Activated CD4-positive, alpha-beta T cell treated with anti-CD3 and anti-CD28 coated beads for 36 hours (primary cell): ENCODE measurements at regions of chr17 and their contacts with region 1.

Region 1: DNA sequence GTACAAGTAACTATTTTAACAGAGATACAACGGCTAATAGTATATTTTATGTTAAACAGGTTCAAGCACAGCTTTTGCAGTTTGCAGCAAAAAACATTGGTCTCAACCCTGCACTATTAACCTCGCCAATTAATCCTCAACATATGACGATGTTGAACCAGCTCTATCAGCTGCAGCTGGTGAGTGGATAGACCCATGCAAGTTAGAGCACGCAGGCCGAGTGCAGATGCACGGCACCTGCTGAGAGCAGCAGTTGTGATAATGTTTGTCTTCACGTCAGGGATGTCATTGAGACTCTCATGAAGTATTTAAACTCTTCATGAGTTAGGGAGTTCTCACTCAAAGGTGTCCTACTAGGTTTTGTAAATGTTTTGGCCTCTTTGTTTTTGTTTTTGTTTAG is 45.6 kb downstream of the TMC6 start:
- DNase-seq: no peak
- ATAC-seq: no peak
- H3K4me3 Mint-ChIP-seq: no peak overlapping the region
- H3K27ac Mint-ChIP-seq: no peak overlapping the region
- H3K4me1 Mint-ChIP-seq: no peaks in the 10 kb centered on the region
- H3K27me3 Mint-ChIP-seq: no peaks in the 10 kb centered on the region

Region 2: DNA sequence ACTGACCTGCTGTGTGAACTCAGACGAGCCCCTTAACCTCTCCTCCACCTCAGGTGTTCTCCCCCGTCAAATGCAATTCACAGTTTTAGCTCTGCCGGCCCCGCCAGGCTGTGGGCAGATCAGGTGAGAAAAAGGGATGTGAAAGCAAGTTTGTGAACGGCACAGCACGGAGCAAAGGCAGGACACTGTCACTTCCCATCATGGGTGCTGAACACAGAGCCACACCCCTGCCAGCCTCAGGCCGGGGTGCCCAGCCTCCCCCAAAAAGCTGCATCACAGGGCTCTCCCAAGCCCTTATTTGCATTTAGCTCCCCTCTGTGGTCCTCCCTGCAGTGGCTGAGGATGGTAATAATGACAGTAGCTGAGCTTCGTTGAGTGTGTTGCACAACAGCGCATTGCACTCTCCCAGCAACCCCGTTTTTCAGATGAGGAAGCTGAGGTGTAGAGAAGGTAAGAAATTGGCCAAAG is 213.3 kb before region 1 on chr17:
- CTCF ChIA-PET with region 1: no interaction called
- POLR2A ChIA-PET with region 1: no interaction called
- intact Hi-C with region 1: no loop called
- DNase-seq: peak; percentile 31
- ATAC-seq: peak; percentile 50
- H3K4me3 Mint-ChIP-seq: no peak overlapping the region
- H3K27ac Mint-ChIP-seq: no peak overlapping the region
- H3K4me1 Mint-ChIP-seq: peaks cover 43% of the 10 kb centered on the region
- H3K27me3 Mint-ChIP-seq: peaks cover 2% of the 10 kb centered on the region

Region 3: GRCh38 chr17:77968788-77969187 is 114.2 kb before region 1 on chr17:
- CTCF ChIA-PET with region 1: no interaction called
- POLR2A ChIA-PET with region 1: no interaction called
- intact Hi-C with region 1: no loop called
- DNase-seq: no peak
- ATAC-seq: no peak
- H3K4me3 Mint-ChIP-seq: no peak overlapping the region
- H3K27ac Mint-ChIP-seq: no peak overlapping the region
- H3K4me1 Mint-ChIP-seq: peaks cover 80% of the 10 kb centered on the region
- H3K27me3 Mint-ChIP-seq: no peaks in the 10 kb centered on the region

Region 4: GRCh38 chr17:78069695-78070094 is 13.3 kb before region 1 on chr17:
- CTCF ChIA-PET with region 1: interaction called, 13 read pairs
- POLR2A ChIA-PET with region 1: no interaction called
- intact Hi-C with region 1: no loop called
- DNase-seq: no peak
- ATAC-seq: no peak
- H3K4me3 Mint-ChIP-seq: no peak overlapping the region
- H3K27ac Mint-ChIP-seq: no peak overlapping the region
- H3K4me1 Mint-ChIP-seq: peaks cover 2% of the 10 kb centered on the region
- H3K27me3 Mint-ChIP-seq: no peaks in the 10 kb centered on the region

Region 5: GRCh38 chr17:78096093-78096492 is 13.1 kb after region 1 on chr17:
- CTCF ChIA-PET with region 1: interaction called, 12 read pairs
- POLR2A ChIA-PET with region 1: no interaction called
- intact Hi-C with region 1: no loop called
- DNase-seq: no peak
- ATAC-seq: no peak
- H3K4me3 Mint-ChIP-seq: no peak overlapping the region
- H3K27ac Mint-ChIP-seq: no peak overlapping the region
- H3K4me1 Mint-ChIP-seq: peaks cover 4% of the 10 kb centered on the region
- H3K27me3 Mint-ChIP-seq: no peaks in the 10 kb centered on the region

Region 6: DNA sequence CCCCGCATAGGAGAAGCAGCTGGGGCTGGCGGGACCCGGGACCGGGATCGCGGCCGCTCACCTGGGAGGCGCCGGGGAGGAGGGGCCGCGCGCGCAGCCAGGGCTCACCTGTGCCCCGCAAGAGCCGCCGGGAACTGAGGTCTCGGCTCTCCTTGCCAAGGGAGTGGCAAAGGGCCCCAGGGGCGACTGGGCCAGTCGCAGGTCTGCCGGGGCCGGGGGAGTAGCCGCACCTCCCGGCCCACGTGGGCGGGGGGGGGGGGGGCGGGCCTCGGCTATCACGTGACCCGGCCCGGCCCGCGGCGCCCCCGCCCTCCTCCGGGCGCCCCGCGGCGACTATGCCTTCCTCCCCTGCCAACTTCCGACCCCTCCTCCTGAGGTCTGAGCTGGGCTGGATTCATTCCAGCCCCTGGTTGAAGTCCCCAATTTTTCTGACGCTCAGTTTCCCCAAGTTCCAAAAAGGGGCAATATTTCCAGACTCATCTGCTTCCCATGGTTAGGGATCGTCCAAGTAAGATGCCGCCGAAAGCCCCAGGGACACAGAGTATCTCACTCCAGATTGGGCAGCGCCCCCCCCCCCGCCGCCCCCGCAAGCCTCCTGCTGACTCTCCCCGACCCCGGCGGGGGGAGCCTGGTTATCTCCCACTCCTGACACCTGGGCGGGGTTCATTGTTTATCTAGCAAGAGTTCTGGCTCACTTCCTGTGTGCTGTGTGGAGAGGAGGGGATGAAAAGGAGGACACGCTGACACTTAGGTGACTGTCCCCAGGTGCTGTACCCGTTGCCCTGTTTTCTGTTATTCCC is 45.8 kb after region 1 on chr17 and contains the start of gene TMC6:
- CTCF ChIA-PET with region 1: interaction called, 9 read pairs
- POLR2A ChIA-PET with region 1: no interaction called
- intact Hi-C with region 1: loop called in 1 of 2 experiments (anchors 2 kb)
- DNase-seq: peak; percentile 87
- ATAC-seq: peak; percentile 31
- H3K4me3 Mint-ChIP-seq: peak within 1 kb of the TSS; percentile 94
- H3K27ac Mint-ChIP-seq: peak within 1 kb of the TSS; percentile 96
- H3K4me1 Mint-ChIP-seq: peaks cover 52% of the 10 kb centered on the region
- H3K27me3 Mint-ChIP-seq: no peaks in the 10 kb centered on the region
- total RNA-seq, gene TMC6: 138 to 145 TPM

Region 7: GRCh38 chr17:78176548-78177025 is 93.6 kb after region 1 on chr17:
- CTCF ChIA-PET with region 1: interaction called, 14 read pairs
- POLR2A ChIA-PET with region 1: no interaction called
- intact Hi-C with region 1: loop called in 1 of 2 experiments (anchors 1 kb)
- DNase-seq: peak; percentile 86
- ATAC-seq: peak; percentile 77
- H3K4me3 Mint-ChIP-seq: no peak overlapping the region
- H3K27ac Mint-ChIP-seq: no peak overlapping the region
- H3K4me1 Mint-ChIP-seq: peaks cover 47% of the 10 kb centered on the region
- H3K27me3 Mint-ChIP-seq: no peaks in the 10 kb centered on the region

Region 8: DNA sequence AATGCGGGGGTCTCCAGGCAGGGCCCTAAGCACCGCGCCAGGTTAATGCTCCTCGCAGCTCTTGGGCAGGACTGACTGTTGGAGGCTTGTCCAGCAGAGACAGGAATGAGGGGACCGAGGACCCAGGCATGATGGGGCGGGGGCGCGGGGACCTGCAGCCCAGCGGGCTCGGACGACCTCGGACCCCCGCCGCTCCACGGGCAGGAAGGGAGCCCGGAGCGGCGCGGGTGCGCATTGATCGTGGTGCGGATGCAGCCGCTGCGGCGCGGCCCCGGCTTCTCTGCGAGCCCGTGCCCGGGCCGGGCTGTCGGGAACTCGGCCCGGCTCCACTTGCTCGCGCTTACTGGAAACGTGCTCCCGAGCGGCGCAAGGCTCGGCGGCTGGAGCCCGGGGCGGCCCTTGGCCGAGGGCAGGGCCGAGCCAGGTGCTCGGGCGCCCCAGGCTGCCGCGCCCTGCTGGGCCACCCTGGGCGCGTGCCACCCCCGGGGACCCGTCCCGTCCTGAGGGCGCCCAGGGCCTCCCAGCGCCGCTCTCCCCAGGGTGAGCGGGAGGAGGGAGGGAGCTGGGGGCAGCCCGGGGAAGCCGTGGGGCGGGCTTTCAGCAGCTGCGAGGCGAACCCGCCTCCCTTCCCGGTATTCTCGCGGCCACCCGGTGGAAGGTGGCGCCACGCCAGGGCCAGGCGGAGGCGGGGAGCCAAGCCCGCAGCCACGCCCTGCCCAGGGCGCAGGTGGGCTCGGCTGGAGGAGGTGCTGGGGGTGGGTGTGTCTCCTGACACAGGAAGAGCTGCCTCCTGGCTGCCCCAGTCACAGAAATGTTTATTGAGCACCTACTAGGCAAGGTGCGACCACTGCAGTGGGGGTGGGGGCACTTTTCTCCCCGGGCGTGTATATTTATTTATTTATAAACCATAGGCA is 231.0 kb after region 1 on chr17:
- CTCF ChIA-PET with region 1: no interaction called
- POLR2A ChIA-PET with region 1: no interaction called
- intact Hi-C with region 1: no loop called
- DNase-seq: peak; percentile 87
- ATAC-seq: peak; percentile 63
- H3K4me3 Mint-ChIP-seq: peak overlapping the region; percentile 52
- H3K27ac Mint-ChIP-seq: peak overlapping the region; percentile 74
- H3K4me1 Mint-ChIP-seq: peaks cover 49% of the 10 kb centered on the region
- H3K27me3 Mint-ChIP-seq: peaks cover 2% of the 10 kb centered on the region